ENCODE measurements at regions of chr11 and their contacts with region 1.

Region 1: GRCh38 chr11:5808500-5809121 is at the start of gene OR52N2:
- DNase-seq: peak; percentile 80
- H3K4me3 ChIP-seq: peak within 1 kb of the TSS in 3 of 4 donors; percentile 33 to 43 (median 41)
- H3K27ac ChIP-seq: no peak within 1 kb of the TSS
- H3K4me1 ChIP-seq: peaks cover 0 to 13% (median 6%) of the 10 kb centered on the region in 4 donors
- H3K27me3 ChIP-seq: peaks cover 0 to 4% (median 0%) of the 10 kb centered on the region in 3 donors
- CTCF ChIP-seq: peak; percentile 61 to 79 (median 72)
- EP300 ChIP-seq: no peak
- POLR2A ChIP-seq: no peak
- total RNA-seq, gene OR52N2: not detected

Region 2: GRCh38 chr11:5123802-5124521 is 684.6 kb before region 1 on chr11:
- intact Hi-C with region 1: loop called (anchors 5 kb)
- DNase-seq: no peak
- H3K4me3 ChIP-seq: no peak overlapping the region
- H3K27ac ChIP-seq: no peak overlapping the region
- H3K4me1 ChIP-seq: no peaks in the 10 kb centered on the region
- H3K27me3 ChIP-seq: no peaks in the 10 kb centered on the region
- CTCF ChIP-seq: peak in 2 of 4 experiments; percentile 60 to 76
- EP300 ChIP-seq: no peak
- POLR2A ChIP-seq: no peak

Region 3: GRCh38 chr11:5476184-5476819 is 332.3 kb before region 1 on chr11:
- intact Hi-C with region 1: loop called (anchors 2 kb)
- DNase-seq: no peak
- H3K4me3 ChIP-seq: no peak overlapping the region
- H3K27ac ChIP-seq: no peak overlapping the region
- H3K4me1 ChIP-seq: no peaks in the 10 kb centered on the region
- H3K27me3 ChIP-seq: no peaks in the 10 kb centered on the region
- CTCF ChIP-seq: peak in 3 of 4 experiments; percentile 45 to 71 (median 64)
- EP300 ChIP-seq: no peak
- POLR2A ChIP-seq: no peak

Region 4: DNA sequence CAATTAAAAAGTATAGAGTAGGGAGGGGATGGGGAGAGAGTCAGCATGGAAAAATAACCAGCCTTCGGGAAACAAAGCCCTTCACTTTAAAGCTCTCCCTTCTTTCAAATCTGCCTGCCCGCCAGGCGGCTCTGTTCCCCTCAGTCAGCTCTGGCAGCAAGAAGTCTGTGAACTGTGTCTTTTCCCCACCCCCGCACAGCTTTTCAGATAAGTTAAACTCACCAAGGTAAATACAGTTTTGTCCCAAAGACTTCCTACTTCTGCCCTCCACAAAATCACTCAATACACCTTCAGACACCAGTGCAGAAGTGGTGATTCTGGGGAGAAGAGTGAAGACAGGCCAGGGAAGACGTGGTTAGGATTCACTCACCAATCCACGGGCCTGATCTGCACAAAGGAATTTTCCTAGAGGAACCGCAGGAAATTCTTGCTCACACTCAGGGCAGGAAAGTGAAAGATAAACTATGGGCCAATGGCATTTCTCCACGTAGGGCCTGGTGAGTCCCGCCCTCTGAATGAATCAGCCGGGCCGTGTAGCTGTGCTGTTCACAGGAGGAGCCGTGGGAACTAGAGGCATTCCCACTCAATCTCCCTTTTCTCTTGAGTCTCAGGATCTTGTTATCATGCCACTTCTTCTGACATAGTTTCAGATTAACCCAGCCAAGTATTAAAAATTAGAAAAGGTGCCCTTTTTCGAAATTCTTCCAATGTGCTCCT is 123.8 kb before region 1 on chr11 and contains the start of gene TRIM5:
- intact Hi-C with region 1: loop called (anchors 5 kb)
- DNase-seq: peak; percentile 95
- H3K4me3 ChIP-seq: peak within 1 kb of the TSS; percentile 24 to 53 (median 49)
- H3K27ac ChIP-seq: peak within 1 kb of the TSS; percentile 89 to 93 (median 90)
- H3K4me1 ChIP-seq: peaks cover 0 to 35% (median 26%) of the 10 kb centered on the region in 4 donors
- H3K27me3 ChIP-seq: no peaks in the 10 kb centered on the region
- CTCF ChIP-seq: peak; percentile 20 to 56 (median 50)
- EP300 ChIP-seq: no peak
- POLR2A ChIP-seq: peak in 1 of 2 donors; percentile 31
- total RNA-seq, gene TRIM5: 11.7 to 29.9 (median 14.3) TPM

Measured in sigmoid colon (tissue), 7 donors.